ENCODE measurements at regions of chr22 and their contacts with region 1.

Region 1: DNA sequence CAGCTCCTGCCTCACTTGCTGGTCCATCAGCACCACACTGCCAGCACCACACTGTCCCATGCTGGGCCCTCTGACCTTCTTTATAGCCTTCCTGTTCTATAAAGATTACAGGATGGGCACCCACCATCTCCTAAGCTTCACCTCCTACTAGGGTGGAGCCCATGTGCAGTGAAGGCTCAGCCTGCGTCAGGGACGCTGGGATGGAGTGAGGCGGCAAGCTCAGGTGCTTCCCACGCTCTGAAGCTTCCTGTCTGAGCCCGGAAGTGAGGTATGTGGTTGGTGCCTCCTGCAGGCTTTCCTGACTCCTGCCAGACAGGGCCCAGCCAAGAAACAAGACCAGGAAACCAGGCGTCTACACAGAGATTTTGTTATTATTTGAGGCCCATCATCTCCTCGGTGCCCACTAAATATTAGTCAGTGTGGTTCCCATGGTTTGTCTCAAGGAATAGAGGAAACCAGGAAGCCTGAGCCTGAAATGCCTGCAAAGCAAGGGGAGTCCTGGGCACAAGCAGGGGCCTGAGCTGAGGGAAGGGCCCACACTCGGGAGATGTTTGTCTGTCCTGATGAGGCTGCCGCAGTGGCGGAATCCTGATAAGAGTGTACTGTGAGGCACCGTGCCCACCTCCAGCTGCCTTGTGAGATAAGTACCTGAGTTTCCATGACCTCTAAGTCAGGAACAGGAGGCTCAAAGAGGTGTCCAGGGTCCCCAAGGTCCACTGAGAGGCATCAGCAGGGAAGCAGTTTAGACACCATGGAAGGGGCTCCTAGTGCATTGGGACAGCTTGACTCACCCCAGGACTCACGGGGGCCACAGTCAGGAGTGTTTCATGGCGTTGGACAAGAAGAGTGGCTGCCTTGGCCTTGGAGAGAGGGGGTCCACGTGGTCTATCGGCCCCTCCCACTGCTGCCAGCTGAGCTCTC is 22.0 kb downstream of the RSPH14 start:
- DNase-seq: no peak
- H3K4me3 ChIP-seq: no peak overlapping the region
- H3K27ac ChIP-seq: no peak overlapping the region
- H3K4me1 ChIP-seq: no peaks in the 10 kb centered on the region
- H3K27me3 ChIP-seq: no peaks in the 10 kb centered on the region
- CTCF ChIP-seq: no peak
- POLR2A ChIP-seq: no peak

Region 2: DNA sequence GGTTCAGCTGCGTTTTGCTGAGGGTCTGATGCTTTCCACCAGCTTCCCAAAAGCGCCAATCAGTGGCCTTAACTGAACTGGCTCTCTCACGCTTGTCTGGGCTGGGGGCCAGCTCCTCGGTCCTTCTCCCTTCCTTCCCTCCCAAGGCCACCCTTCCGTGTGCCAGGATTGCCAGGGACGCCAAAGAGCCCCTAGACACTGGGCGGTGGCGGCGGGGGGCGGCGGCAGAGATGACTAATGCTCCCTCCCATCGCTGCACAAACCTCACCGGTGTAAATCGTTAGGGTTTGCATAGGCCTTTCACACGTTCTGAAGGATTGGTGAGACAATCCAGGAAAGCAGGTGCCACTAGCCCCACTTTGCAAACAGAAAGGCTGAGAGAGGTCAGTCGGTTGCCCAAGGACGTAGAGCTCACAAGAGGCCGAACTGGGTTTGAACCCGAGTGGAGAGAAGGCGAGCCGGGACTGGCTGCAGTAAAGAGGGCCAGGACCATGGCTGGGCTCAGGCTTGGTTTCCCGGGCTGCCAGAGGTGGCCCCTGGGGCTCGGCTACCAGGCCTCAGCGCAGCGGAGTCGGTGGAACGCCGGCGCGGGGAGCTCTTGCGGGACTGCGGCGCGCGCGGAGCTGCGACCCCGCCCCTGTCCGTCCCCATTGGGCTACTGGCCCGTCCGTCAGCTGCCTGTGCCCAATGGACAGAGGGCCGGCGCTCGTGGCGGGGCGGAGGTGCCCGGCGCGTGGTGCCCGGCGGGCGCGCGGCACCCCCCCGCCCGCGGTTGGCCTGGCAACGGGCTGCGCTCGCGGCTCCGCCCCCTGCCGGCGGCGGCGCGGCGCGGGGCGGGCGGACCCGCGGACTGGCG is 50.0 kb before region 1 on chr22:
- intact Hi-C with region 1: loop called (anchors 5 kb)
- DNase-seq: peak; percentile 90
- H3K4me3 ChIP-seq: peak overlapping the region; percentile 38 to 42
- H3K27ac ChIP-seq: peak overlapping the region in 1 of 2 donors; percentile 45
- H3K4me1 ChIP-seq: peaks cover 11% of the 10 kb centered on the region
- H3K27me3 ChIP-seq: no peaks in the 10 kb centered on the region
- CTCF ChIP-seq: no peak
- POLR2A ChIP-seq: peak; percentile 20

Region 3: DNA sequence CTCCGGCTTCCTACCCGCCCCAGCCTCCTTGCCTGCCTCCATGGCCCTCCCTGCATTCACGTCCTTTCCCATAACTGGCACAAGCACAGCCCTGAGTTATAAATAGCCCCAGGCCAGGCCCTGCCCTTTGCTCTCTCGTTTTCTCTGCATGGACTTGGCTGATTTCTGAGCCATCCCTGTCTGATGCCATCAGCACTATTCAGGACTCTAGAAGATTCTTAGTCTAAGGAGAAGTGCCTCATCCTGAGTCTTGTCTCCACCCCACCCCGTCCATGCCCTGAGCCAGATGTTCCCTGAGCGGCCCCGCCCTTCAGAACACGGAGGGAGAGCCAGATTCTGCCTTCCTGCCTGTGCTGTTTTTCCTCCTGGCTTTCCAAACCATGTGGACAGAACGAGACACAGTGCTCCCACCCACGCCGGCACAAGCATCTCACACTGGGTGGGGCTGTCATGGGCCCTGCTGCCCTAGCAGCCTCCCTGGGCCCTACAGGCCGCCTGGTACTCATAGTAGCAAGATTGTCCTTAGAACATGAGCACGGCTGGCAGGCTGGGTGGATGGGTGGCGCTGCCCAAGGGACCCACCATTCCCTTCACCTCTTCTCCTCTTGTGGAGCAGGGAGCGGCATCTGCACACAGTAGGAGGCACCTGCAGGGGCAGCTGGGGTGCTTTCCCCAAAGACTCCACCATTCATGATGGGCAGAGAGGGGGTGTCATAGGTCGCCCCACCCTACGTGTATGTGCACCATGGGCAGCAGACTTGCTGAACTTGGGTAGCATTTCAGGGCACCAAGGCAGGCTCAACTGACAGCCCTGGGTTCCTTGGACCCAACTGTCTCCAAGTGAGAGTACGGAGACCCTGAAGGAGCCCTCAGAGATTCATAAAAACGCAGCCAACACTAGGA is 137.5 kb after region 1 on chr22:
- intact Hi-C with region 1: no loop called
- DNase-seq: no peak
- H3K4me3 ChIP-seq: no peak overlapping the region
- H3K27ac ChIP-seq: peak overlapping the region; percentile 25 to 47
- H3K4me1 ChIP-seq: peaks cover 11% of the 10 kb centered on the region
- H3K27me3 ChIP-seq: no peaks in the 10 kb centered on the region
- CTCF ChIP-seq: no peak
- POLR2A ChIP-seq: no peak